Dendritic cell treated with granulocyte-macrophage colony-stimulating factor and Interleukin-4, amounts not matched to agents 40 ng/mL and 50 ng/mL, for 4 days (primary cell): ENCODE measurements at regions of chr5 and their contacts with region 1.

Region 1: DNA sequence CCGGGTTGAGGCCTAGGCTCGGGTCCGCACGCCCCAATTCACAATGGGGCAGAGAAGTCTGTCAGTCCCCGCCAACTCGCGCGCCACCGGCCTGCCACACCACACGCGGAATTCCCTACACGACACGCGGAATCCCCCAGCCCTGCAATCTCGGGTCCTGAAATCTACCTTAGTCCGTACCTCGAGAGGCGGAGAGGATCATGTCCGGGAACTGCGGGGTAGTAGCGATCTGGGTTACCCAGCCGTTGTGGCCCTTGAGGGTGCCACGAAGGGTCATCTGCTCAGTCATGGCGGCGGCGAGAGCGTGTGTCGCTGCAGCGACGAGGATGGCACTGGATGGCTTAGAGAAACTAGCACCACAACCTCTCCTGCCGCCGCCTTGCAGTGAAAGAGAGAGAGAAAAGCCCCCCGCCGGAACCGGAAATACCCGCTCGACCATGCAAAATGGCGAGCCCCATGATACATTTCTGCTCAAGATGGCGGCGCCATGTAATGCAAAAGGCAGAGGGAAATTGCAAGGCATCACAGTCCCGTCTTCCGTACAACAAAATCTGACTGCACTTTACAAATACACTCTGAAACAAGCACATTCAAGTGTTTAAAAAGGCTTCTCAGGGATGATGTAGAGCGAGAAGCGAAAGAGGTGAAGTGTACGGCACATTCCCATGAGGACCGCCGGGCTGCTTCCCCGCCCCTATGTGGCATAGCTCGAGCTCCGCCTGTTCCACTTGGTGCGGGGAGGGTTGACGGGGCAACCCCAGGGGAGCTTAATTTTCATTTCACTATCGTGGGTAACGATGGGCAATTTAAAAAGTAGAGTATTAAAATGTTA is at the start of gene RACK1:
- H3K4me3 Mint-ChIP-seq: peak within 1 kb of the TSS; percentile 96
- H3K27ac Mint-ChIP-seq: peak within 1 kb of the TSS; percentile 100
- H3K4me1 Mint-ChIP-seq: peaks cover 58% of the 10 kb centered on the region
- H3K27me3 Mint-ChIP-seq: no peaks in the 10 kb centered on the region

Region 2: DNA sequence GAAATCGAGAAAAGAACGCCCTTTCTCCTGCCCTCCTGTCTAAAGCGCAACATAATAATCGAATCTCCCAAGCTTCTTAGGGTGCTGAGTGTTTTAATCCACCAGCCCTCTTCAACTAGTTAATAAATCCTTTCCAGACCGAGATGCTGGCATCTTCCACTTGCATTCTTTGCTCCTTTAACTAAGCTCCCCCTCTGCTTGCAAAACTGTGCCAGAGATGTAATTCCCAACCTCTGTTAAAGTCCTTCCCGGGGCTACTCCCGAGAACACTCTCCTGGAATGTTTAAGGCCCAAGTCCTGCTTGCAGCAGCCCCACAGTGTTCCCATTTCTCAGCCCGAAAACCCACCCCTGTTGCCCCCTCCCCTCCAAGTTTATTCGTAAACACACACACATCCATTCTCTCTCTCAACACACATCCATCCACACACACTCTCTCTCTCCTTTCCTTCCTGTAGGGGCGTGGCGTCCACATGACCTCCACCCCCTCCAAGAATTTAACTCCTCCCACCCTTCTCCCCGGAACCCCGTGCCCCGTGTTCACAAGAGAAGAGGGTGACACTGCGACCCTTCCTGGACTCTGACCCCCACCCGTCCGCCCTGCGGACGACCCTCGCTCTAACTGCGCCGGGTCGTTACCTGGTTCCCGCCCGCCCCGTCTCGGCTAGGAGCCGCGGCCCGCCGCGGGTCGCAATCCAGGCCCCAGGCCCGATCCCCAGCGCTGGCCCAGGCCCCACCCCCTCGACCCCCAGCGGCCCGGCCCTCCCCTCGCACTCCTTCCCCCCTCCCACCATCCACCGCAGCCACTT is 434.1 kb before region 1 on chr5:
- intact Hi-C with region 1: loop called (anchors 10 kb)
- H3K4me3 Mint-ChIP-seq: peak overlapping the region; percentile 94
- H3K27ac Mint-ChIP-seq: peak overlapping the region; percentile 97
- H3K4me1 Mint-ChIP-seq: peaks cover 89% of the 10 kb centered on the region
- H3K27me3 Mint-ChIP-seq: no peaks in the 10 kb centered on the region

Region 3: DNA sequence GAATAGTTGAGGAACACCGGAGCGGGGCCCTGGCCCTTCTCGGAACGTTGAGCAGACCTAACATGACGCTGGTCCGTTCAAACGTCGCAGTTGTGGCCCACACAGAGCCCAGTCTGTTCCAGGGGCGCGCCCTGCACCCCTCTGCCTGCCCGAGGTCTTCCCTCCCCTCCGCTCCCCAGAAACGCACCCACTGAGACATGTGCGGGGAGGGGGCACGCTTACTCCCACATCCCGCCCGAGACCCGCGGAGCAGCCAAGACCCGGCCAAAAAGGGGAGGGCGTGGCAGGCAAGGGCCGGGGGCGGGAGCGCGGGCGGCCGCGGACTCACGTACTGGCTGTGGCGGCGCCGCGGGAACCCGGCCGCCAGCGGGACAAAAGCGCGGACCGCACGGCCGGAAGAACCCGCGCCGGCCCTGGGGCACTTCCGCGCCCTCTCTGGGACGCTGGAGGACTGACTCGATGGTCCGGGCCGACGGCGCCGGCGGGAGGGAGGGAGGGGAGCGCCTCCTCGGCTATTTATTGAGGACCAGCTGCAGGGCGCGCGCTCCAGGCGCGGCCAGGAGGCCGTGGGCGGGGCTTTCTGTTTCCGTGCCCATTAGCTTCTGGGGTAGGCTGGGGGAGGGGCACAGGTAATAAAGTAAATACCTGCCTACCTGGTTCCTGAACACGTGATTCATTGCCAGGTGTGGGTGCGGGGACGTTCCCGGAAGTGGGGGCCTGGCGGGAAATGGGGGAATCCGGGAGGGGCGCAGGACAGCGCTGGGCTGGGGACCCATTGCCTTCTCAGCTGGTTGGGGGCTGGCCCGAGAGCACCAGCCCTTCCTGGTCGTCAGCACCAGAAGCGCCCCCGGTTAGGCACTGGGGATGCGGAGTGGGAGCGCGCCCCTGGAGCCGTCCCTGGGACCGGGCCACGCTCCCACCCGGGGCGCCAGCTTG is 382.6 kb before region 1 on chr5 and contains the start of gene ZFP62:
- intact Hi-C with region 1: loop called (anchors 5 kb)
- H3K4me3 Mint-ChIP-seq: peak within 1 kb of the TSS; percentile 91
- H3K27ac Mint-ChIP-seq: peak within 1 kb of the TSS; percentile 88
- H3K4me1 Mint-ChIP-seq: peaks cover 22% of the 10 kb centered on the region
- H3K27me3 Mint-ChIP-seq: peaks cover 5% of the 10 kb centered on the region

Region 4: DNA sequence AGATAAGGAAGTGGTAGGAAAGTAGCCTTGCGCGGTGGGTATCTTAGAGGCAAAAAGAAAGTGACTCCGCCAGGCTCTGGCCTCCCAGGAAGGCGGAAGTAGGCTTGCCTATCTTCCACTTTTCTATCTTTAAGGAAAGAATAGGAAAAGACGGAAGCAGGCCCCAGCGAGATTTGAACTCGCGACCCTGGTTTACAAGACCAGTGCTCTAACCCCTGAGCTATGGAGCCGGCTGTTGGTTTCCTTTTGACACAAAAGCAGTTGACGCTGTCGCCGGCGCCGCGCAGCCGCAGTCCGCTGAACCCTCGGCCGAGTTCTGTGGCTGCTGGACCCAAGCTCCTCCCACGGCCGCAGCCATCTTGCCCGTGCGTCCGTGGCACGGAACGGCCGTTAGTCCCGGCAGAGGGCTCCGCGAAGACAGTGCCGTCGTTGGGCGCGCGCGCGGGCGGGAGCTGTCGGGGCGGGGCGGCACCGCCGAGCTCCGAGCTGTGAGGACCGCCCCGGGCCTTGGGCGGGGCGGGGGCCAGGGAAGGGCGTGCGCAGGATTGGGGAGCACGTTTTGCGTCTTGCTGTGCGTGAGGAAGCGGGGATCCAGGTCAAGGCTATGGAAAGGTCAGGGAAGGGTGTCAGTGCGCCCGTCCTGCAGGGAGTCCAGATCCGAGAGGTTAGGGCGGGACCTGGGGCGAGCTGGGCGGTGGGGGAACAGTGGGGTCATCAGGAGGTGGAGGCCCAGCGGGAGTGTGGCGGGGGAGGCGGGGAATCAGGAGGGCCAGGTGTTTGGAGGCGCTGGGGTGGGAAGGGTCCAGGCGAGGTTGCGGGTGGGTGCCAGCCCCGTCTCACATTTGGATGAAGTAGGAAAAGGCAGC is 52.0 kb before region 1 on chr5:
- intact Hi-C with region 1: loop called (anchors 1 kb)
- H3K4me3 Mint-ChIP-seq: peak overlapping the region; percentile 99
- H3K27ac Mint-ChIP-seq: peak overlapping the region; percentile 99
- H3K4me1 Mint-ChIP-seq: peaks cover 58% of the 10 kb centered on the region
- H3K27me3 Mint-ChIP-seq: peaks cover 21% of the 10 kb centered on the region

Region 5: DNA sequence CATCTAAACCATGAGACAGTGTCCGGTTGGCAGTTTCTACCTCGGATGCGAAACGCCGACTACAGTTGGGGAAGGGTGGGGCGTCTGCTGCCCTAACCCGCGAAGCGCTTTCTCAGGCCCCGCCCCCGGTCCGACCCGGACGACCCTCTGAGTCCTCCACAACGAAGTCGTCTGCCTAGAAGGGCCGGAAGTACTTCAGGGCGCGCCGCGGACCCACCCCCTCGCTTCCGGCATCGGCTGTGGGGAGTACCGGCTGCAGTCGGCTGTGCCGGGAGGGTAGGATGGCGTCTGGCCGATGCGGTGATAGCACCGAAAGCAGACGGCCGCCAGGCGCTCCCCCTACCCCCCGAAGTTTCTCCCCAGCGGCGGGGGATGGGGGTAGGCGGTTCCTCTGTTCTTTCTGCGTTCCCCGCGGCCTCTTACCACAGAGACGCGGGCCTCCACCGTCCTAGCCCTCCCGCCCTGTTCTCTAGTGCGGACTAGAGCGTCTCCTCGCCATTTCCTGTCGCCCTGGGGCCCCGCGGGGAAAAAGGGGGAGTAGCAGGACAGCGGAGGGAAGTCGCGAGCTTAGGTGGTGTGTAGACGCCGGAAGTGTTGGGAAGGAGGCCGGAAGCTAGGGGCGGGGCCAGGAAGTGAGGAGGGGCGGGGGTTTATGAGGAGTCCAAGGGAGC is 20.5 kb before region 1 on chr5 and contains the start of gene TRIM41:
- intact Hi-C with region 1: loop called (anchors 1 kb)
- H3K4me3 Mint-ChIP-seq: peak within 1 kb of the TSS; percentile 82
- H3K27ac Mint-ChIP-seq: peak within 1 kb of the TSS; percentile 93
- H3K4me1 Mint-ChIP-seq: peaks cover 47% of the 10 kb centered on the region
- H3K27me3 Mint-ChIP-seq: peaks cover 3% of the 10 kb centered on the region

Region 6: DNA sequence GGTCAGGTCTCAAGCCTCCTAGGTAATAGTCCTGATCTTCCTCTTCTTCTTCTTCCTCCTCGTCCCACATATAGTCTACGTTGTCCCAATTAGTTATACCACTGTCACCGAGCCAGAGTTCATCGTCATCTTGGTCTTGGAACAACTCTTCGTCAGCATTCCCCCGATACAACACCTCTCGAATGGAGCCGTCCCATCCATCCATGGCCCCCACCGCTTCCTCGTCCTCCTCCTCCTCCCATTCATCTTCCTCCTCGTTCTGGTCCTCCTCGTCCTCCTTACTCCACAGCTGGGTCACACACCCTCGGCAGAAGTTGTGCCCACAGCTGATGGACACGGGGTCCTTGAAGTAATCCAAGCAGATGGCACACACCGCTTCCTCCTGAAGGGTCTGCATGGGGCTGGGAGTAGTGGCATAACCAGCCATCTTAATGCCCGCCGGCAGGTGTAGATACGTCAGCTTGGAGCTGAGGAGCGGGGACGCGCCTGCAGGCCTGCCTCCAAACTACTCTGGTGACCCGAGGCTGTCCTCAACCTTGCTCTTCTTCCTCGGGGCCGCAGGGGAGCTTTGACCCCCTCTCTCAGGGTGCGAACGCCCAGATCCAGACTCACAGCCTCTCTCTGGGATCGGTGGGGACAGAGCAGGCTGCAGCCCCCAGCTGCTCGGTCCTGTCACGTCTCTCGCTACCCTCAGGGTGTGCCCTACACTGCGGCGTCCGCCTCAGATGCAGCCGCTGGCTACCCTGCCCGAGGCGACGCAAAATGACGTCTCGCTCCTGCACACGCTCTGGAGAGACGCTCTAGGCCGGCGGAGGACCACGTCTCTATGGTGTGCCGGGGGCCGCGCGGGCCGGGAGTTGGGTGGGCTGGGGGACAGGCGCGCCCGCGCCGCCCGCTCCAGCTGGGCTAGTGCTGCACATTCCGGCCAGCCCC is 16.9 kb after region 1 on chr5 and contains the start of gene TRIM52:
- intact Hi-C with region 1: loop called (anchors 1 kb)
- H3K4me3 Mint-ChIP-seq: peak within 1 kb of the TSS; percentile 85
- H3K27ac Mint-ChIP-seq: peak within 1 kb of the TSS; percentile 90
- H3K4me1 Mint-ChIP-seq: peaks cover 41% of the 10 kb centered on the region
- H3K27me3 Mint-ChIP-seq: no peaks in the 10 kb centered on the region